OCI-LY7 (cell line): ENCODE measurements at regions of chr12 and their contacts with region 1.

Region 1: GRCh38 chr12:61808856-61809255 is 451.3 kb upstream of the USP15 start:
- DNase-seq: no peak
- H3K4me3 ChIP-seq: no peak overlapping the region
- H3K27ac ChIP-seq: no peak overlapping the region
- H3K4me1 ChIP-seq: no peaks in the 10 kb centered on the region
- CTCF ChIP-seq: no peak

Region 2: GRCh38 chr12:60539592-60539991 is 1269.3 kb before region 1 on chr12:
- CTCF ChIA-PET with region 1: no interaction called
- POLR2A ChIA-PET with region 1: no interaction called
- intact Hi-C with region 1: loop called (anchors 5 kb)
- DNase-seq: no peak
- H3K4me3 ChIP-seq: no peak overlapping the region
- H3K27ac ChIP-seq: no peak overlapping the region
- H3K4me1 ChIP-seq: no peaks in the 10 kb centered on the region
- CTCF ChIP-seq: no peak

Region 3: GRCh38 chr12:61780435-61780834 is 28.4 kb before region 1 on chr12:
- CTCF ChIA-PET with region 1: no interaction called
- POLR2A ChIA-PET with region 1: no interaction called
- intact Hi-C with region 1: no loop called
- DNase-seq: no peak
- H3K4me3 ChIP-seq: no peak overlapping the region
- H3K27ac ChIP-seq: no peak overlapping the region
- H3K4me1 ChIP-seq: no peaks in the 10 kb centered on the region
- CTCF ChIP-seq: no peak